Heart left ventricle (tissue), 16 donors: ENCODE measurements at regions of chr2 and their contacts with region 1.

Region 1: DNA sequence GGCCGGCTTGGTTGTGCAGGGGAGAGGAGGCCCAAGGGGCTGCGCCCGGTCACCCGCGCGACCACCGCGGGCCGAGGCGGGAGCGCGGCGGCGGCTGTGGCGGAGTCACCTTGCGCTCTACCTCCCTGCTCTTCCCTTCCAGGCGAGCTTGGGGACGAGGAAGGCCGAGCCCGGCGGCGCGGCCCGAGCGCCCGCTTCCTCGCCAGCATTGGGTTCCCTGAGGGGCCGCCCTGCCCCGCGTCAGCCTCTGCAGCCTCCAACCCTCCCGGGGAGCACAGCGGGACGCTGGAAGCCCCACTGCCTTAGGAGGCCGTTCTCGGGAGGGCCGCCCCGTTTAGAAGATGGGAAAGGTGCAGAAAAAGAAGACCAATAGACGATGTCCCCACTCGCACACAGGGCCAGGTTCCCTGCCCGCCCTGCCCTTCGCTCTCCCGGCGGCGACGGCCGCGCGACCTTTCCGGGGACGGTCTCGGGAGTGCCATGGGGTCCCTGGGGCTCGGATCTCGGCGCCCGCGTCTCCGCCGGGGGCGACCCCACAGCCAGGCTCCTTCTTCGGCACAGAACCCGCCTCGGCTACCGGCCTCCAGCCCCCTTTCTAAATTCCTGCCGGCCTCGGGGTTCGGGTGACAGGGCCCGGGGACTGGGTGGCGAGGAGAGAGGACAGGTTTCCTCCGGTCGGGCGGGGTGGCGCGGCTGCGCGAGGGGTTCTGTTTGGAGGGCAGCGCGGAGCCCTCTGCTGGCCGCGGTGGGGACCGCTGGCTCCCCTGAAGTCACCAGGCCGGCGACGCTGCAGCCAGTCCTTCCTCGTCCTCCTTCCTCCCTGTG is 85.5 kb downstream of the HS6ST1 start:
- DNase-seq: peak; percentile 87 to 95 (median 92)
- ATAC-seq: peak; percentile 89 to 98 (median 96)
- H3K4me3 ChIP-seq: peak overlapping the region; percentile 39 to 87 (median 68)
- H3K27ac ChIP-seq: peak overlapping the region; percentile 44 to 96 (median 83)
- H3K4me1 ChIP-seq: peaks cover 0 to 14% (median 5%) of the 10 kb centered on the region in 12 donors
- H3K27me3 ChIP-seq: peaks cover 0 to 4% (median 0%) of the 10 kb centered on the region in 9 donors
- CTCF ChIP-seq: peak; percentile 82 to 95 (median 92)
- POLR2A ChIP-seq: no peak

Region 2: DNA sequence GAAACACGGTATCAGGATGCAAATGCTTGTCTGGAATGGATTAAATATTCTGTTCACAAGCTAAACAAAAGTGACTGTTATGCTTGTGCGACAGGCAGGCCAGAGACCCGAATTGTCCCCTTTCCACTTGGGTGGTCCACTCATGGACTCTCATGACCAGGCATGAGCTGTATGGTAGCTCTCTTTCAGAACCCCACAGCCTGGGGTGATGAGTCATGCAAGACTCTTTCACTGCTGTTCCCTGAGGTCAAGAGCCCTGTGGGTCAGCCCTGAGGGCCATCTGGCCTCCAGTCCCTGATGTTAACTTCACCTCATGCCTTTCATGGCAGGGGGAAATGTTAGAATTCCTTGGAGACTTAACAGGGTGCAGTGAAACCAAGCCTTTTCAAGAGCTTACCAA is 191.6 kb before region 1 on chr2:
- intact Hi-C with region 1: no loop called
- DNase-seq: no peak
- ATAC-seq: no peak
- H3K4me3 ChIP-seq: no peak overlapping the region
- H3K27ac ChIP-seq: no peak overlapping the region
- H3K4me1 ChIP-seq: no peaks in the 10 kb centered on the region
- H3K27me3 ChIP-seq: peaks cover 0 to 10% (median 0%) of the 10 kb centered on the region in 9 donors
- CTCF ChIP-seq: no peak
- POLR2A ChIP-seq: no peak

Region 3: DNA sequence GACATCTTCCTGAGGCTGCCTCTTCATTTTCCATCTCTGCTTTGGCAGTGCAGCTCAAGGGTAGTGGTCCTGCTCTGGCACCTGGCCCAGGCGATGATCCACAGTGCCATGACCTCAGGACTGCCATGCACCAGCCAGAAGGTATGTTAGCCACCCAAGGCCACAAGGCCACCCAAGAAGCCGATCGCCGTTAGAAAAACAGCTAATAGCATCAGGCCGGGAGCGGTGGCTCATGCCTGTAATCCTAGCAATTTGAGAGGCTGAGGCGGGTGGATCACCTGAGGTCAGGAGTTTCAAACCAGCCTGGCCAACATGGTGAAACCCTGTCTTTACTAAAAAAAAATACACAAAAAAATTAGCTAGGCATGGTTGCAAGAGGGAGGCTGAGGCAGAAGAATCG is 170.6 kb before region 1 on chr2:
- intact Hi-C with region 1: loop called in 1 of 10 experiments (anchors 5 kb)
- DNase-seq: no peak
- ATAC-seq: no peak
- H3K4me3 ChIP-seq: no peak overlapping the region
- H3K27ac ChIP-seq: no peak overlapping the region
- H3K4me1 ChIP-seq: no peaks in the 10 kb centered on the region
- H3K27me3 ChIP-seq: no peaks in the 10 kb centered on the region
- CTCF ChIP-seq: no peak
- POLR2A ChIP-seq: no peak

Region 4: GRCh38 chr2:128178650-128179460 is 54.3 kb before region 1 on chr2:
- intact Hi-C with region 1: loop called in 7 of 10 experiments (anchors 2 to 10 kb)
- DNase-seq: peak in 4 of 5 donors; percentile 39 to 59 (median 55)
- ATAC-seq: peak; percentile 96 to 98 (median 98)
- H3K4me3 ChIP-seq: no peak overlapping the region
- H3K27ac ChIP-seq: peak overlapping the region in 11 of 12 donors; percentile 34 to 89 (median 80)
- H3K4me1 ChIP-seq: peaks cover 0 to 15% (median 3%) of the 10 kb centered on the region in 12 donors
- H3K27me3 ChIP-seq: no peaks in the 10 kb centered on the region
- CTCF ChIP-seq: peak; percentile 38 to 84 (median 69)
- POLR2A ChIP-seq: no peak

Region 5: GRCh38 chr2:128187032-128187654 is 46.0 kb before region 1 on chr2:
- intact Hi-C with region 1: loop called in 3 of 10 experiments (anchors 2 to 5 kb)
- DNase-seq: no peak
- ATAC-seq: peak in 3 of 4 donors; percentile 27 to 58 (median 56)
- H3K4me3 ChIP-seq: peak overlapping the region in 7 of 12 donors; percentile 0 to 39 (median 6)
- H3K27ac ChIP-seq: peak overlapping the region in 10 of 12 donors; percentile 15 to 82 (median 44)
- H3K4me1 ChIP-seq: peaks cover 0 to 18% (median 5%) of the 10 kb centered on the region in 12 donors
- H3K27me3 ChIP-seq: no peaks in the 10 kb centered on the region
- CTCF ChIP-seq: no peak
- POLR2A ChIP-seq: no peak

Region 6: DNA sequence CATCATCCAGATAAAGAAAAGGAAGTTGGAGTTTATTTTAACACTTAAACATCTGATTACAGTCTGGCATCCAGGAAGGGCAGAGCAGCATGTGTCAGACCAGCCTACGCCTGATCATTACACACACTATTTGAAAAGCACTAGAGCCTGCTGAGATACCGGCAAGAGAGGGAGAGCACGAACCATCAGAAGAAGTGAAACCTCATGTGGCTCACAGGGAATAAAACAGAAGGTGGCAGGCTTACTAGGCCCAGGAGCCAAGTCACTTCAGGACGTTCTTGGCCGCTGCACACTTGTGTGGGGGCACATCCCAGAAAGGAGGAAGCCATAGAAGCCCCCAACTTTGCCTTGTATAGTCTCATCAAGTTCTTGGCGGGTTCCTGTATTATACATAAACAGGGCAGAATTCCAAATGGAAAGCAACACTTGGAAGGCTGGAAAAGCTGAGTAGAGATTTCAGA is 36.7 kb before region 1 on chr2:
- intact Hi-C with region 1: loop called in 4 of 10 experiments (anchors 5 kb)
- DNase-seq: no peak
- ATAC-seq: peak in 3 of 4 donors; percentile 64 to 72 (median 67)
- H3K4me3 ChIP-seq: no peak overlapping the region
- H3K27ac ChIP-seq: peak overlapping the region in 3 of 12 donors; percentile 4 to 11 (median 6)
- H3K4me1 ChIP-seq: peaks cover 0 to 24% (median 13%) of the 10 kb centered on the region in 12 donors
- H3K27me3 ChIP-seq: no peaks in the 10 kb centered on the region
- CTCF ChIP-seq: no peak
- POLR2A ChIP-seq: no peak

Region 7: DNA sequence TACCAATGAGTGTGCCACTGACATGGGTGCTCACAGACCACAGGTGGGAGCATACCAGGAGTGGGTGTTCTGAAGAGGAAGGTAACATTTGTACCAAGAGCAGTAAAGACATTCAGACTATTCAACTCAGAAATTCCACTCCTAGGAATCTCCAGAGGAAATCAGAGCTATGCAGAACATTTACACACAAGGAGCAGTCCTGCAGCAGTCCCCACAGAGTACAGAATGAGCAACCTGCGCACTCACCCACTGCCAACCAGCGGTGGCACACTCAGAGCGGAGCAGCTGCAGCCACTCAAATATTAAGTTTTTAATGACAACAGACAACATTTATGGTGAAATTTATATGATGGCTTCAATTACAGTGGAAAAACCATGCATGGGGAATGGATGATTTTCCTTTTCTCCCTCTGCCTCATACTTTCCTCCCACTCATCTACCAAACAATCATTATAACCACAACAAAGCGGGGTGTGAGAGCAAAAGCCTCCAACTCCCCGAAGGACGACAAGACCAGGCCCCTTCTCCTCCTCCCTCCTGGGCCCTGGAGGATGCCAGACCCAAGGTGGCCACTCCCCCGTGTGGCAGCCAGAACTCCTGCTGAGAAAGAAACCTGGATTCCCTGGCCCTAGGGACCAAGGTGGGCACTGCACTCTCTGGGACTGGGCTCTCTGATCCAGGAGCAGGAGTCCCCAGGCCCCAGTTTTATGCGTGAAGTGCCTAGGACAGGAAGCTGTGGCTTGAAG is 80.1 kb after region 1 on chr2:
- intact Hi-C with region 1: loop called in 4 of 10 experiments (anchors 5 to 10 kb)
- DNase-seq: peak in 2 of 5 donors; percentile 10 to 26
- ATAC-seq: no peak
- H3K4me3 ChIP-seq: no peak overlapping the region
- H3K27ac ChIP-seq: no peak overlapping the region
- H3K4me1 ChIP-seq: peaks cover 7 to 83% (median 41%) of the 10 kb centered on the region in 12 donors
- H3K27me3 ChIP-seq: no peaks in the 10 kb centered on the region
- CTCF ChIP-seq: no peak
- POLR2A ChIP-seq: no peak